H1 (cell line): ENCODE measurements at regions of chr11 and their contacts with region 1.

Region 1: GRCh38 chr11:57493507-57494503 is 21.7 kb downstream of the SLC43A1 start:
- DNase-seq: peak; percentile 88 to 93
- H3K4me3 ChIP-seq: no peak overlapping the region
- H3K27ac ChIP-seq: peak overlapping the region; percentile 88
- H3K4me1 ChIP-seq: peaks cover 0 to 7% (median 5%) of the 10 kb centered on the region in 4 experiments; a peak in 4 of 7 replicates
- H3K27me3 ChIP-seq: no peaks in the 10 kb centered on the region
- CTCF ChIP-seq: peak; percentile 81 to 90 (median 87)
- EP300 ChIP-seq: peak in 1 of 2 experiments; percentile 81; a peak in 1 of 3 replicates
- POLR2A ChIP-seq: peak in 1 of 2 experiments; percentile 36; a peak in 1 of 3 replicates
- RAD21 ChIP-seq: peak; percentile 63 to 74

Region 2: GRCh38 chr11:57480409-57481137 is 13.2 kb before region 1 on chr11:
- CTCF ChIA-PET with region 1: interaction called, 193 read pairs
- POLR2A ChIA-PET with region 1: interaction called, 90 read pairs
- DNase-seq: peak in 1 of 2 experiments; percentile 97
- H3K4me3 ChIP-seq: no peak overlapping the region
- H3K27ac ChIP-seq: no peak overlapping the region
- H3K4me1 ChIP-seq: peaks cover 7 to 32% (median 9%) of the 10 kb centered on the region in 4 experiments
- H3K27me3 ChIP-seq: peaks cover 0 to 35% (median 26%) of the 10 kb centered on the region in 4 experiments; a peak in 6 of 7 replicates
- CTCF ChIP-seq: peak; percentile 86 to 92 (median 90)
- EP300 ChIP-seq: no peak
- POLR2A ChIP-seq: no peak
- RAD21 ChIP-seq: peak; percentile 61 to 75

Region 3: DNA sequence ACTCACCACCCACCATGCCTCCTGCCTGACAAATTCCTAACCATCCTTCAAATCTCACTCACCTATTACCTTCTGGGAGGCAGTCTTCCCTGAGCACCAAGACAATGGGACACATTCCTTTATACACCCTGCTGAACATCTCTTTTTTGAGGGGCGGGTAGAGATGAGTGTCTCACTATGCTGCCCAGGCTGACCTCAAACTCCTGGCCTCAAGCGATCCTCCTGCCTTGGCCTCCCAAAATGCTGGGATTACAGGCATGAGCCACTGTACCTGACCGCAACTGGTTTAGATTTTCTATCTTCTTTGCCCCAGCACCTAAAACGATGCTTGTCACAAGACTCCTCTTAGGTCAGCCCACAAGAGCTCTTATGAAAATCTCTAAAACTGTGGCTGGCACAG is 29.6 kb after region 1 on chr11:
- CTCF ChIA-PET with region 1: interaction called, 1,146 read pairs
- POLR2A ChIA-PET with region 1: interaction called, 79 read pairs
- DNase-seq: no peak
- H3K4me3 ChIP-seq: no peak overlapping the region
- H3K27ac ChIP-seq: no peak overlapping the region
- H3K4me1 ChIP-seq: peaks cover 0 to 7% (median 3%) of the 10 kb centered on the region in 4 experiments; a peak in 3 of 7 replicates
- H3K27me3 ChIP-seq: no peaks in the 10 kb centered on the region
- CTCF ChIP-seq: no peak
- EP300 ChIP-seq: no peak
- POLR2A ChIP-seq: no peak
- RAD21 ChIP-seq: no peak

Region 4: GRCh38 chr11:57562596-57562995 is 68.8 kb after region 1 on chr11:
- CTCF ChIA-PET with region 1: interaction called, 20 read pairs
- POLR2A ChIA-PET with region 1: interaction called, 7 read pairs
- DNase-seq: no peak
- H3K4me3 ChIP-seq: no peak overlapping the region
- H3K27ac ChIP-seq: no peak overlapping the region
- H3K4me1 ChIP-seq: peaks cover 4 to 7% (median 4%) of the 10 kb centered on the region in 4 experiments; a peak in 6 of 7 replicates
- H3K27me3 ChIP-seq: no peaks in the 10 kb centered on the region
- CTCF ChIP-seq: peak in 2 of 3 experiments; percentile 54 to 57; a peak in 3 of 4 replicates
- EP300 ChIP-seq: no peak
- POLR2A ChIP-seq: no peak
- RAD21 ChIP-seq: peak; percentile 73 to 79

Region 5: DNA sequence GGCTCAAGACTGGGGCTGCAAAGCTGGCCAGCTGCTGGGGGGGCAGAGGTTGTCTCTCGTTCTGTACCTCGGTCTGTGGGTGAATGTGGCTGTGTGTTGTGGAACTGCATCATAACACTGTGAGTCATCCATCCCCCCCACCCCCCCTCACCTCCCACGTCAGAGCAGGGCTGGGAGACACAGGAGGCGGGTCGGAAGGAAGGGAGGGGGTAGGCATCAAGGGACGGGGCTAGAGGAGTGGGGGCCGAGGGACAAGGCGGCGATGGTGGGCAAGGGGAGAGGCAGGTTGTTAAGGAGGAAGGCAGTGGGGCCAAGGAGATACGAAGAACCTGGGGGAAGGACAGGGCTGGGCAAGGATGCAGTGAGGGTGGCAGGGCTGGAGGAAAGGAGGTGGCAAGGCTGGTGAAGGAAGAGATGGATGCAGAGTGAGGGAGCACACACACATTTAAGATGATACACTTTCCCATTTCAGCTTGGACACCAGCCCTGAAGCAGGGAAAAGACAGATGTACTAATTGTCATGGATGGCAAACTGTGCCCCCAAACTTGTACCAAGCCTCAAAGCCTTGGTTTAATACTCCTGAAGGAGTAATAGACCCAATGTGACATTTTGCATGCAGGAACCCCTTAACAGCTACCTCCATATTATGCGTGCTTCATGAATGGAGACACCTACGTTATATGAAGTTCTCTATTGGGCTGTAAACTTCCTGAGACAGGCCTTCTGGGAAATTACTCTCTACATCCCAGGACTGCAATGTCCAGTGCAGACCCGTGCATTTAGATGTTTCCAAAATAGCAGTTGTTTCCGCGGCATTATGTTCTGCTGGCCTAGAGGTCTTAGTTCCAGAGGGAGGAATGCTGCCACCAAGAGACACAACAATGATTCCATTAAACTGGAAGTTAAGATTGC is 156.3 kb after region 1 on chr11 and contains the start of gene YPEL4:
- CTCF ChIA-PET with region 1: interaction called, 11 read pairs
- POLR2A ChIA-PET with region 1: interaction called, 26 read pairs
- DNase-seq: peak in 1 of 2 experiments; percentile 60
- H3K4me3 ChIP-seq: peak within 1 kb of the TSS; percentile 27 to 65 (median 50); a peak in 7 of 8 replicates
- H3K27ac ChIP-seq: no peak within 1 kb of the TSS
- H3K4me1 ChIP-seq: peaks cover 26 to 47% (median 34%) of the 10 kb centered on the region in 4 experiments
- H3K27me3 ChIP-seq: peaks cover 0 to 4% (median 1%) of the 10 kb centered on the region in 4 experiments; a peak in 5 of 7 replicates
- CTCF ChIP-seq: no peak
- EP300 ChIP-seq: no peak
- POLR2A ChIP-seq: peak; percentile 36 to 75
- RAD21 ChIP-seq: no peak
- total RNA-seq, gene YPEL4: 0.13 TPM in 1 of 2 replicates, not detected in the other